ENCODE measurements at regions of chr22 and their contacts with region 1.

Region 1: GRCh38 chr22:27405672-27406388 is 395.7 kb downstream of the MN1 start:
- DNase-seq: peak; percentile 82
- H3K4me3 ChIP-seq: no peak overlapping the region
- H3K27ac ChIP-seq: no peak overlapping the region
- H3K4me1 ChIP-seq: no peaks in the 10 kb centered on the region
- H3K27me3 ChIP-seq: no peaks in the 10 kb centered on the region
- CTCF ChIP-seq: peak; percentile 79
- EP300 ChIP-seq: no peak
- RAD21 ChIP-seq: peak; percentile 76

Region 2: GRCh38 chr22:27331526-27332281 is 74.1 kb before region 1 on chr22:
- CTCF ChIA-PET with region 1: no interaction called
- POLR2A ChIA-PET with region 1: no interaction called
- DNase-seq: peak; percentile 81
- H3K4me3 ChIP-seq: no peak overlapping the region
- H3K27ac ChIP-seq: no peak overlapping the region
- H3K4me1 ChIP-seq: peaks cover 0 to 6% of the 10 kb centered on the region in 2 experiments; a peak in 1 of 4 replicates
- H3K27me3 ChIP-seq: no peaks in the 10 kb centered on the region
- CTCF ChIP-seq: peak; percentile 49
- EP300 ChIP-seq: no peak
- RAD21 ChIP-seq: peak; percentile 69

Region 3: DNA sequence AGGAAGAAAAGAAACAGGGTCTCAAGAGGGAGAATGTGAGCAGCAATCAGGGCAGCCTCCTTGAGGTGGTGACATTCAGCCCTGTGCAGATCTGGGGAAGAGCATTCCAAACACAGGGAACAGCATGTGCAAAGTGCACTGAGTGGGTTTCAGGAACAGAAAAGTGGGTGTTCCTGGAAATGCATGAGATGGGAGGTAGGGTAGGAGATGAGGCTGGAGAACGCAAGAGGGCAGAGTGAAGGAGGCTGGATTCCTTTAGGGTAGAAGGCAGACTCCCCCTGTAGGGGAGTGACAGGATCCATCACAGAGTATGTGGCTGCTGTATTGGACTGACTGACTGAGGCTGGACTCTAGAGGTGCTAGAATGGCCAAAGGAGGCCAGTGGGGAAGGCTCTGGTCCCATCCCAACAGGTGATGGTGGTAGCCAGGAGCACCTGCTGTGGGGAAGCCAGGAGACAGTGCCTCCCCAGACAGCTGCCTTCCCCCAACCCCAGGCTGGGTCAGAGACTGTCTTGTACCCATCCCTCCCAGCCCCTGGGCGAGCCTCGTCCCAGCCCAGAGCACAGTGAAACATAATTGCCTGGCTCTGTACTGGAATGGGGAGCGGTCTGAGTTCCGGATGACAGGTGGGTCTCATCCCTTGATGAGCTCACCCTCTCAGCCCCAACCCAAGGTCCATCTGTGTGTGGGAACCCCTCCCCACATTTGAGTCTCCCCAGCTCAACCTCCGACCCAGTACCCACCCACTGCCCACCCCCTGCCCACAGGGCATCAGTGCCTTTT is 23.7 kb before region 1 on chr22:
- CTCF ChIA-PET with region 1: interaction called, 12 read pairs
- POLR2A ChIA-PET with region 1: no interaction called
- DNase-seq: no peak
- H3K4me3 ChIP-seq: no peak overlapping the region
- H3K27ac ChIP-seq: no peak overlapping the region
- H3K4me1 ChIP-seq: peaks cover 9 to 11% of the 10 kb centered on the region in 2 experiments; a peak in 3 of 4 replicates
- H3K27me3 ChIP-seq: peaks cover 91% of the 10 kb centered on the region
- CTCF ChIP-seq: no peak
- EP300 ChIP-seq: no peak
- RAD21 ChIP-seq: no peak

Region 4: GRCh38 chr22:27420817-27421361 is 15.1 kb after region 1 on chr22:
- CTCF ChIA-PET with region 1: interaction called, 12 read pairs
- POLR2A ChIA-PET with region 1: no interaction called
- DNase-seq: no peak
- H3K4me3 ChIP-seq: no peak overlapping the region
- H3K27ac ChIP-seq: peak overlapping the region in 1 of 2 experiments; percentile 61; a peak in 1 of 4 replicates
- H3K4me1 ChIP-seq: peaks cover 9 to 23% of the 10 kb centered on the region in 2 experiments; a peak in 3 of 4 replicates
- H3K27me3 ChIP-seq: no peaks in the 10 kb centered on the region
- CTCF ChIP-seq: no peak
- EP300 ChIP-seq: peak in 1 of 2 experiments; percentile 77; a peak in 2 of 4 replicates
- RAD21 ChIP-seq: no peak

Measured in SK-N-SH (cell line).